Colonic mucosa (tissue), 4 donors: ENCODE measurements at regions of chrX and their contacts with region 1.

Region 1: DNA sequence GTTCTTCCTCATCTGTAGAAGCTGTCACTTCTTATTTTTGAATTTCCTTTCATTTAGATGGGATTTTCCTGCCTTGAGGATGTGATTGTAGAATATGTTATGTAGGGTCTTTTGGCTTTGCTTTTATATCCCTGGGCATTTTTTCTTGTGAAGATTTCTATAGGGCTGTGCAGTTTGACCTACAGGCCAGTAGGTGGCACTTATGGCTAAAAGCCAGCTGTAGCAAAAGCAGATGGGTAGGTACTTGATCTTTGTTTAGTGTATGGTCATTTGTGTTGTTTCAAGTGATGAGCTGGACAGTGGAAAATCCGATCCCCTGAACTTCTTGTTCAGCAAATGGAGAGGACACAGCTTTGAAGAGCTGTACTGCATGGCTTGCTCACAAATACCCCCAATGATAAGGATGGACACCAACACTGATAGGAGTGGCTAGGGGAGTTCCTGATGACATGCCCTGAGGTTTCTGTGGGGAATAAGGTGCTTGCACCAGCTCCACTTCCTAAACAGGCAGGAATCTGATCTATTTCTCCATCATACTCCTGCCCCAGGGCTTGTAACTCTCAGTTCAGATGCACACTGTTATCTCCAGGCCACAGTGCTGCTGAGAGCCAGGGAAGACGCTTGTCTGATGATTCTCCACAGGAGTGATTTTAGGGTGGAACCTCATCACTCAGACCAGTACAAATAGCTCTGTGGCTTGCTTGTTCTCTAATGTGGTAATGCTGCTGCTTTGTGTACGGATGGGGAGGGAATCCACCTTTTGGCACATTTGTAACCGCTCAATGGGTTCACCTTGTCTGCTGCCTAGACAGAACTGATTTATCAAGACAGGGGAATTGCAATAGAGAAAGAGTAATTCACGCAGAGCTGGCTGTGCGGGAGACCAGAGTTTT is 417.1 kb upstream of the MAGEB16 start:
- DNase-seq: no peak
- H3K4me3 ChIP-seq: no peak overlapping the region
- H3K27ac ChIP-seq: no peak overlapping the region
- H3K4me1 ChIP-seq: no peaks in the 10 kb centered on the region
- H3K27me3 ChIP-seq: no peaks in the 10 kb centered on the region
- CTCF ChIP-seq: peak; percentile 74

Region 2: DNA sequence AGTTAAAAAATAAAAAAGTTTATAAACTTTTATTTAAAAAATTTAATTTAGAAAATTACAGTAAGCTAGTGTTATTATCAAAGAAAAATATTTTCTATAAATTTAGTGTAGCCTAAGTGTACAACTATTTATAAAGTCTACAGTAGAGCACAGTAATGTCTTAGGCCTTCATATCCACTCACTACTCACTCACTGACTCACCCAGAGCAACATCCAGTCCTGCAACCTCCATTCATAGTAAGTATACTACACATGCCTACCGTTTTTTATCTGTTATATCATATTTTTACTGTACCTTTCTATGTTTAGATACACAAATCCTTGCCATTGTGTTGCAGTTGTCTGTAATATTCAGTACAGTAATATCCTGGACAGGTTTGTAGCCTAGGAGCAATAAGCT is 567.4 kb before region 1 on chrX:
- intact Hi-C with region 1: no loop called
- DNase-seq: no peak
- H3K4me3 ChIP-seq: no peak overlapping the region
- H3K27ac ChIP-seq: no peak overlapping the region
- H3K4me1 ChIP-seq: no peaks in the 10 kb centered on the region
- H3K27me3 ChIP-seq: no peaks in the 10 kb centered on the region
- CTCF ChIP-seq: no peak

Region 3: DNA sequence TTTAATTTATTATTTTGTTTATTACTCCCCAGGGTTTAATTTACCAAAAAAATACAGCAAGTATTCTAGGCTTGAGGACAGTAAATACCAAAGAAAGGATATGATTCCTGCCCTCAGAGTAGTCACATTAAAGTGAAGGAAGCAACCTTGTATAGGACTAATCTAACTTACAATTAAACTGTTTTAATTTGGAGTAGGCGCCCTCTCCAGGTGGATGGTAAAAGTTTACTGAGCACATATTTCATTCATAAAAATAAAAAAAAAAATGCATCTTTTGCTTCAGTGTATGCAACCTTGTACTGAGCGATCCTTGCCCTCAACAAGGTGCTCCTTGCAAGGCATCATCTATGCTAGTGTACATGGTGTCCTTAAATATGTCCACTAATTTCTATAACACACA is 345.1 kb after region 1 on chrX:
- intact Hi-C with region 1: loop called (anchors 10 kb)
- DNase-seq: no peak
- H3K4me3 ChIP-seq: no peak overlapping the region
- H3K27ac ChIP-seq: no peak overlapping the region
- H3K4me1 ChIP-seq: no peaks in the 10 kb centered on the region
- H3K27me3 ChIP-seq: no peaks in the 10 kb centered on the region
- CTCF ChIP-seq: peak; percentile 22